ENCODE measurements at regions of chr7 and their contacts with region 1.

Region 1: DNA sequence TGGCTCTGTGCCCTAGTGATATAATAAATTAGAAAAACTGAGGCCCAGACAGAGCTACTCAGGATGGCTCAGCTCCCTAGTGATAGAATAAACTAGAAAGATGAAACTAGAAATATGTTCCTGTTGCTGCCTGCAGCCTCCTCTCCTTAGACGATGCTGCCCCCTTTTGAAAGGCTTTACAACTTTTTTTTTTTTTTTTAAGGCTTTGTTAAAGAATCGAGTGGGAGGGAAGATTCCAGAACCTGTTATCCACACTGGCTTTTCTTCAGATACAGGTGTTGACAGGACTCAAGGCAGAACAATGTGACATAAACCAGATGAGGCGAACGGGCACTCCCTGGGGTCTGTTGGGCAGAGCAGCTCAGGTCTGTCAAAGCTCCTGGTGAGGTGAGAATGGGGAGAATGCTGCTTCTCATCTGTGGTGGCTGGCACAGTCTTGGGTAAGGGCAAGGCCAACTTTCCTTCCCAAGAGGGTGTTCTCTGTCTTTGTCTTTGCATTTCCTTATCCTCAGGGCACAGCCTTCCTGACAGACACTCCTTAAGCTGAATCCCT is 175.1 kb downstream of the COBL start:
- DNase-seq: no peak
- H3K4me3 ChIP-seq: no peak overlapping the region
- H3K27me3 ChIP-seq: peaks cover 5% of the 10 kb centered on the region
- CTCF ChIP-seq: peak; percentile 75

Region 2: GRCh38 chr7:50679218-50680007 is 462.1 kb before region 1 on chr7:
- CTCF ChIA-PET with region 1: interaction called, 15 read pairs
- POLR2A ChIA-PET with region 1: no interaction called
- DNase-seq: no peak
- H3K4me3 ChIP-seq: no peak overlapping the region
- H3K27me3 ChIP-seq: no peaks in the 10 kb centered on the region
- CTCF ChIP-seq: 0 out of 2 replicates have a peak, but pooled peaks have one; percentile 16

Region 3: GRCh38 chr7:51067757-51068156 is 73.8 kb before region 1 on chr7:
- CTCF ChIA-PET with region 1: interaction called, 17 read pairs
- POLR2A ChIA-PET with region 1: no interaction called
- DNase-seq: peak; percentile 14
- H3K4me3 ChIP-seq: no peak overlapping the region
- H3K27me3 ChIP-seq: no peaks in the 10 kb centered on the region
- CTCF ChIP-seq: peak; percentile 79

Region 4: GRCh38 chr7:51154201-51154600 is 12.7 kb after region 1 on chr7:
- CTCF ChIA-PET with region 1: interaction called, 45 read pairs
- POLR2A ChIA-PET with region 1: no interaction called
- DNase-seq: no peak
- H3K4me3 ChIP-seq: no peak overlapping the region
- H3K27me3 ChIP-seq: peaks cover 2% of the 10 kb centered on the region
- CTCF ChIP-seq: no peak

Region 5: DNA sequence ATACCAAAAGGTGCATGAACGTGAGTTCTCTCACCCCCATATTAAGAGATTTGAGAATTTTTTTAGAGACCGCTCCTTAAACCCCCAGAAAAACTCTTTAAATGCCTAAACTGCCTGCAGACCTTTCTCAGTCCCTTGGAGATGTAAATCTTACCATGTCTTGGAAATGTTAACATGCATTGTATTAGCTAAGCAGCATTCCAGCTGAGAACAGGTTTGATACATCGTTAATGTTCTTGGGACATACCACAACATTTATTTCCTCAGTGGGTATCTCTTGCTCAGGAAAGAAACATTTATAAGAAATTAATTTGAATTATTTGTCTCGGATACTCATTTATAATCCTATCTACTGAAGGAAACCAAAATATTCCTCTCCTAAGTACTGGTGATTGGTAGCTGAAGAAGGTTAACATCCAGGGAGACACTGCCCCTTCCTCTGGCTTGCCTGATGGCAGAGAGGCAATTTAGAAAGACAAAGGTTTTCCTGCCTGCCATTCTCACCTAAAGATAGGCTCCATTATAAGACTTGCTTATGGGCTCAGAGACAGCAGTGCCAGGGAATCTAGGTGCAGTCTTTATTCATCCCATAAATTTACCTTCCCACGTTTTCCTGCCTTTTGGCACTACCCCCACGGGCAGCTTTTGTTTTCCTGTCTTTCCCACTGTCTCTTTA is 33.9 kb after region 1 on chr7:
- CTCF ChIA-PET with region 1: no interaction called
- POLR2A ChIA-PET with region 1: no interaction called
- DNase-seq: no peak
- H3K4me3 ChIP-seq: no peak overlapping the region
- H3K27me3 ChIP-seq: no peaks in the 10 kb centered on the region
- CTCF ChIP-seq: no peak